Endothelial cell of umbilical vein (primary cell): ENCODE measurements at regions of chr12 and their contacts with region 1.

Region 1: DNA sequence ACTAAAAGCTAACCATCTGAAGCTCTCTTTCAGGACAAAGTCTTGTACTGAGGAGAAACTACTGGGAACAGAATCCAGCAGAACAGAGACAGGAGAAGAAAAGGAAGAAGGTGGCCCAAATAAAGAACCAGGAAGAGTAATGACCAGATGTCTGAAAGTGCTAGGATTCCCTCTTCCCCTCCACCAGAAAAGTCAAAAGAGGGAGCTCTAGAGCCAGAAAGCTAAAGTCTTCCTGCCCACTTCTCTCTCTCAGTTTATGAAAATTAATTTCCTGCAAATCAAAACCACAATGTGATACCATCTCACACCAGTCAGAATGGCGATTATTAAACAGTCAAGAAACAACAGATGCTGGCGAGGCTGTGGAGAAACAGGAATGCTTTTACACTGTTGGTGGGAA is 47.2 kb downstream of the SPPL3 start:
- DNase-seq: no peak
- H3K4me3 ChIP-seq: no peak overlapping the region
- H3K27ac ChIP-seq: no peak overlapping the region
- H3K4me1 ChIP-seq: no peaks in the 10 kb centered on the region
- H3K27me3 ChIP-seq: no peaks in the 10 kb centered on the region
- CTCF ChIP-seq: peak in 1 of 2 donors; percentile 9
- POLR2A ChIP-seq: no peak

Region 2: DNA sequence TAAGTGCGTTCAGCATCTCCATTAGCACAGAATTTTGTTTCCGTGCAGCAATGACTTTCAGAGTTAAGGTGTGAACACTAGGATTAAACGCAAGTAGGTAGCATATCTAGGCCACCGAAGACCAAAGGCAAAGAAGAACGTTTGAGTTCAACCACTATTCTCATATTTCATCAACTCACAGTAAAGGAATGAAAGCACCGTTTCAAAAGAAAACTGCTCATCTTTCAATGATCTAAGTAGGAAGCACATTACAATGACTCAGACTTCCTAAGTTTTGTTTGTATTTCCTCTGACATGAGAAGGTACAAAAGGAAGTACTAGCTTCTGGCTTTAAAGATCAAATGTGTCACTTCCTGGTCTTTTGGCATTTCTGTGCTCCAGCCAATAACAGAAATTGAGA is 73.8 kb before region 1 on chr12:
- CTCF ChIA-PET with region 1: interaction called, 10 read pairs
- POLR2A ChIA-PET with region 1: no interaction called
- dilution Hi-C with region 1: no loop called
- intact Hi-C with region 1: no loop called
- DNase-seq: peak; percentile 87
- H3K4me3 ChIP-seq: peak overlapping the region in 1 of 3 experiments; percentile 27
- H3K27ac ChIP-seq: peak overlapping the region; percentile 90
- H3K4me1 ChIP-seq: peaks cover 24% of the 10 kb centered on the region
- H3K27me3 ChIP-seq: no peaks in the 10 kb centered on the region
- CTCF ChIP-seq: no peak
- POLR2A ChIP-seq: peak; percentile 46

Region 3: GRCh38 chr12:120892265-120892664 is 35.3 kb after region 1 on chr12:
- CTCF ChIA-PET with region 1: interaction called, 11 read pairs
- POLR2A ChIA-PET with region 1: no interaction called
- dilution Hi-C with region 1: no loop called
- intact Hi-C with region 1: no loop called
- DNase-seq: peak; percentile 33
- H3K4me3 ChIP-seq: no peak overlapping the region
- H3K27ac ChIP-seq: no peak overlapping the region
- H3K4me1 ChIP-seq: peaks cover 2% of the 10 kb centered on the region
- H3K27me3 ChIP-seq: no peaks in the 10 kb centered on the region
- CTCF ChIP-seq: no peak
- POLR2A ChIP-seq: no peak